ENCODE measurements at regions of chr20 and their contacts with region 1.

Region 1: GRCh38 chr20:57473246-57474048 is 51.5 kb downstream of the CTCFL start:
- DNase-seq: no peak
- H3K4me3 ChIP-seq: no peak overlapping the region
- H3K27ac ChIP-seq: no peak overlapping the region
- H3K4me1 ChIP-seq: peaks cover 0 to 28% (median 19%) of the 10 kb centered on the region in 4 experiments; a peak in 6 of 7 replicates
- H3K27me3 ChIP-seq: no peaks in the 10 kb centered on the region; a peak in 1 of 7 replicates
- CTCF ChIP-seq: no peak
- EP300 ChIP-seq: no peak
- POLR2A ChIP-seq: no peak
- RAD21 ChIP-seq: no peak; a peak in 1 of 4 replicates

Region 2: DNA sequence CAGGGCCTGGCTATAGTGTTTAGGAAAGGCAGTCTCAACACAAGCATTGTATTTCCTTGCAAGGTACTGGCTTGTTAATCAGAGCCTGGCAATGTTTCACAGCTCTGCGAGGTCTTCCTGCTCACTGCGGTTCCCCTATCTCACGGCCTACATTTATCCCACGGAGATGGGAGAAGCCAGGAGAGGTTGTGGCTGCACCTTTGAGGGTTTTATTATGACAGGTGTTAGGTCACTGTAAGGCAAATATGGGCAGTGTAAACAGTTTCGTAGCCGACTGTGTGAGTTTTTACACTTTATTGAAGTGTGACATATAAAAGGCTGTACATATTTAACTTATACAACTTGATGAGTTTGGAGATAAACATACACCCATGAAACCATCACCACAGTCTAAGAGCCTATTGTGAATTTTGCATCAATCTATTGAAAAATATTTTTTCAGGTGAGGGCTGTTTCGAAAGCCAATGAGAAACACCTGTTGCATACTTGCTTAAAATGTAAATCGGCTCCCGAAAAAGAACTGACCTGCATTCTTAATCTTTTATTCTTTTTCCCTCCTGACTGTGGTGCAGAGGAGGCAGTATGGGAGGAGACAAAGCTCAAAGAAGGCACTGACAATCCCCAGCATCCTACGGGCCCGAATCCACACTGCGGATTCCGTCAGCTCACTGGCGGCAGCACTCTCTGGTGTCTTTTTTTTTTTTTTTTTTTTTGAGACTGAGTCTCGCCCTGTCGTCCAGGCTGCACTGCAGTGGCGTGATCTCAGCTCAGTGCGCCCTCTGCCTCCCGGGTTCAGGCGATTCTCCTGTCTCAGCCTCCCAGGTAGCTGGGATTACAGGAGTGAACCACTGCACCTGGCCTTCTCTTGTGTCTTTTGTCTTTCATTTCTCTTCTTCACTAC is 89.8 kb before region 1 on chr20:
- CTCF ChIA-PET with region 1: interaction called, 13 read pairs
- POLR2A ChIA-PET with region 1: interaction called, 13 read pairs
- DNase-seq: no peak
- H3K4me3 ChIP-seq: no peak overlapping the region
- H3K27ac ChIP-seq: no peak overlapping the region
- H3K4me1 ChIP-seq: no peaks in the 10 kb centered on the region
- H3K27me3 ChIP-seq: no peaks in the 10 kb centered on the region
- CTCF ChIP-seq: no peak
- EP300 ChIP-seq: no peak
- POLR2A ChIP-seq: no peak
- RAD21 ChIP-seq: no peak

Region 3: DNA sequence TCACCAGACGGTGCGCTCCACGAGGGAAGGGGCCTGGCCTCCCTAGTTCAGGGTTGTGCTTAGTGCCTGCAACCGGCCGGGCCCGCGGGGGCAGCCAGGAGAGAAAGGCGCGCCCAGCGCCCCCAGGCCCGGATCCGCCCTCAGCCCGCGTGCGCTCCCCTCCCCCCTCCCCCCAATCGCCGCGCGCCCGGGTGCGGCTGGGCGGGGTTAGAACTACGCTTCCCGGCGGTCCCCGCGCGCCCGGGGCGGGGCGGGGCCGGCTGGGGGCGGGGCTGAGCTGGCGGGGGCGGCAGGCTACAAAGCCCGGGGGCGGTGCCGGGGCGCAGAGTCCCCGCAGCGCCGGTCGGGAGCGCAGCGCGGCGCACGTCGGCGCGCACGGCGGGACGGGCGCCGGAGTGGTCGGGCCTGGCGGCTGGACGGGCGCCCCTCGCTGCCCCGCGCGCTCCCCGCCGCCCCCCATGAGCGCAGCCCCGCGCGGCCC is 82.3 kb before region 1 on chr20 and contains the start of gene RBM38:
- CTCF ChIA-PET with region 1: interaction called, 4 read pairs
- POLR2A ChIA-PET with region 1: interaction called, 13 read pairs
- DNase-seq: peak in 1 of 2 experiments; percentile 86
- H3K4me3 ChIP-seq: peak within 1 kb of the TSS; percentile 60 to 94 (median 72)
- H3K27ac ChIP-seq: peak within 1 kb of the TSS; percentile 31; the same call in 1 of the 2 replicates
- H3K4me1 ChIP-seq: peaks cover 5 to 27% (median 18%) of the 10 kb centered on the region in 4 experiments
- H3K27me3 ChIP-seq: peaks cover 0 to 10% (median 4%) of the 10 kb centered on the region in 4 experiments; a peak in 4 of 7 replicates
- CTCF ChIP-seq: no peak
- EP300 ChIP-seq: no peak
- POLR2A ChIP-seq: peak in 1 of 2 experiments; percentile 22; a peak in 1 of 3 replicates
- RAD21 ChIP-seq: no peak
- total RNA-seq, gene RBM38: 57.7 and 60.1 TPM in 2 replicates

Region 4: DNA sequence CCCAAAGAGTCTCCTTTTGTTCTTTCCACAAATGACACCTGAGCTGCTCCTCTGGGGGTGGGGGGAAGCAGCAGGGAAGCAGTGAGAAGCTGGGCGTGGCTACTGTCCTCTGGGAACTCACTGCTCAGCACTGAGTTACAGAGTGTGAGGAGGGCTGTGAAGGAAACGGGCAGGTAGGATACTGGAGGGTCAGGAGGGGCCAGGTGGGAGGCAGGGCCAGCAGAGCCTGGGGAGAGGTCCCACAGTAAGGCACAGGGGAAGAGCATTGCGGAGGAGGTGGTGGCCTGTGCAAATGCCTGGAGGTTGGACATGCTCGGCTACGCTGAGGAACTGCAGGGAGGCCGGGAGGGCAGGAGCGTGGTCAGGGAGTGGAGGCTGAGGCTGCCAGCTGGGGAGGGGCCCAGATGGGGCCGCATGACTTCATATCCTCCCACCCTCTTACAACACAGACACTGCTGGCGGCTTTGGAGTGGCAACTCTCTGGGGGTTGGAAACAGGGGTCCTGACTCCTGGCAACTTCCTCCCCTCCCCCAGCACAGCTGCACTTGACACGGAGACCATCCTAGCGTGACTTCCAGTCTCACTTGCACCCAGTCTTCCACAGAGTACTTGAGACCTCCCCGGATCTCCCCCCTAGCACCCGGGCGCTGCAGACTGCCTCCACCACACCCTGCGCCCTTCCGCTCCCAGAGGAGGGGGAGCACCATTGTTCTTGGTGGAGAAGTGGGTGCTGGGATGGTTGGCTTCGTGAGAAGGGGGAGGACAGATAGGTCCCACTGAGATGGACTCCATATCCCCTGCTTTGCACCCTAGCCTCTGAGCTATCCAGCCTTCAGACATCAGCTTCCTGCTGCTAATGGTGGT is 48.1 kb before region 1 on chr20:
- CTCF ChIA-PET with region 1: interaction called, 14 read pairs
- POLR2A ChIA-PET with region 1: no interaction called
- DNase-seq: no peak
- H3K4me3 ChIP-seq: no peak overlapping the region
- H3K27ac ChIP-seq: no peak overlapping the region
- H3K4me1 ChIP-seq: peaks cover 0 to 14% (median 10%) of the 10 kb centered on the region in 4 experiments; a peak in 5 of 7 replicates
- H3K27me3 ChIP-seq: no peaks in the 10 kb centered on the region
- CTCF ChIP-seq: no peak
- EP300 ChIP-seq: no peak
- POLR2A ChIP-seq: no peak
- RAD21 ChIP-seq: no peak

Region 5: GRCh38 chr20:57498425-57499400 is 25.3 kb after region 1 on chr20:
- CTCF ChIA-PET with region 1: interaction called, 18 read pairs
- POLR2A ChIA-PET with region 1: no interaction called
- DNase-seq: no peak
- H3K4me3 ChIP-seq: no peak overlapping the region
- H3K27ac ChIP-seq: no peak overlapping the region
- H3K4me1 ChIP-seq: peaks cover 0 to 4% (median 2%) of the 10 kb centered on the region in 4 experiments; a peak in 5 of 7 replicates
- H3K27me3 ChIP-seq: no peaks in the 10 kb centered on the region
- CTCF ChIP-seq: peak; percentile 62 to 68 (median 68)
- EP300 ChIP-seq: no peak
- POLR2A ChIP-seq: no peak
- RAD21 ChIP-seq: peak; percentile 52 to 69

Measured in H1 (cell line).